ENCODE measurements at regions of chr7 and their contacts with region 1.

Region 1: GRCh38 chr7:112550468-112551060 is 69.8 kb downstream of the LSMEM1 start:
- DNase-seq: peak in 1 of 3 donors; percentile 73
- ATAC-seq: peak; percentile 87
- H3K4me3 ChIP-seq: no peak overlapping the region
- H3K4me1 ChIP-seq: no peaks in the 10 kb centered on the region
- CTCF ChIP-seq: peak; percentile 65

Region 2: GRCh38 chr7:113026941-113027340 is 476.4 kb after region 1 on chr7:
- intact Hi-C with region 1: no loop called
- DNase-seq: no peak
- ATAC-seq: no peak
- H3K4me3 ChIP-seq: no peak overlapping the region
- H3K4me1 ChIP-seq: no peaks in the 10 kb centered on the region
- CTCF ChIP-seq: no peak

Region 3: GRCh38 chr7:113421696-113422330 is 871.2 kb after region 1 on chr7:
- intact Hi-C with region 1: loop called (anchors 5 to 10 kb)
- DNase-seq: peak; percentile 45 to 96 (median 47)
- ATAC-seq: peak; percentile 93
- H3K4me3 ChIP-seq: no peak overlapping the region
- H3K4me1 ChIP-seq: no peaks in the 10 kb centered on the region
- CTCF ChIP-seq: peak; percentile 44